Right ventricle myocardium inferior (tissue), 1 donor: ENCODE measurements at regions of chrX and their contacts with region 1.

Region 1: DNA sequence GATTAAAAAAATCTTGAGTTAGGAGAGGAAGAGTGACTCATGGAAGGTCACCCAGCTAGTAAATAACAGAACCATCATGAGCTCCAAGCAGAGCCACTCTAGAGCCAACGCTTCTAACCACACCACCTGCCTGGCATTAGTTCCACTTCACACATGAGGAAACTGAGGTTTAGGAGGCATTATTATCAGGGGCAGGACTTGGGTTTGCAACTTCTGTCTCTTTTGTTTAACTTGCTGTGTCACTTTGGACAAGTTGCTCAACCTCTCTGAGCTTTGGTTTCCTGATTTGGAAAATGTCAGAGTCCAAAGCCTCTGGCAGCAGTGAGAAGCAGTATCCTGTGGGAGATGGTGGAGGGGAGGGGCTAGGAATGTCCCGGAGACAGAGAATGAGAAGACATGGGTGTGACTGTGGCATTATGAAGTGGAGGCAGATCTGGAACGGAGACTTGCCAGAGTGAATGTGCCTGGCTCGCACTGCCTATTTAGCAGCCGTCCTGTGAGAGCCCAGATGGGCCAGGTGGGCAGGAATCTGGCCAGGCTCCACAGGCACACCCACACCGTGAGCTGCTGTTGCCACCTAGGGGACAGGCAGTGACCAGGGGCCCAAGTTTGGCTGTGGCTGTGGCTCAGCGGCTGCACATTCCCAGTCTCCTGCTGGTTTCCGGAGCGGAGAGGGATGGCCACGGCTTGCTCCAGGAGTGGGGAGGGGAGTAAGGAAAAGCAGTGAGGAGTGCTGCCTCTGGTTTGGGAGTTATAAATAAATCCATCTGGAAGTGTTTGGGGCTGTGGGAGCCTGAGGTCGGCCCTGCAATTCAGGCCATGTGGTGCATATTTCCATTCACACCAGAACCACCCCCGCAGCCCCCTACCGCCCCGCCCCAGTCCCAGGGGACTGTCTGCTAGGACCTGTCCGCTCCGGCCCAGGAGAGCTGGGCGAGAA is 93.4 kb downstream of the NHSL2 start:
- DNase-seq: peak; percentile 50
- ATAC-seq: peak; percentile 89

Region 2: DNA sequence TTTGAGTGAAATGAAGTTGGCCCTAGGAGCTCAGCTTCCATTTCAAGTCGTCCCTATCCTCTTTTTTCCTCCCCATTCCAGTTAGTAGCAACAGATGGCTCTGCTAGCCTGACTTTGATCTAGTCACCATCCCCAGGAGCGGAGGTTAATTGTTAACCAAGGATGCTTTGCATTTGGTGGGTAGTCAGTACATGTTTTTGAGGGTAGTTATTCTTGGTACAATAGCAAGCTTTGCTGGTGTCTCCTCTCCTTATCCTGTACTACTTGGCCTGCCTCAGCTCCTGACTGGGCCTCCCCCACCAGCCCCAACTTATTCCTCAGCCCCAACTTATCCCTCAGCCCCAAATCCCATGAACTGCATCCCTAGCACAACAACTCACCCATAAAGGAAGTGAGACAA is 142.4 kb after region 1 on chrX:
- intact Hi-C with region 1: no loop called
- DNase-seq: no peak
- ATAC-seq: no peak

Region 3: DNA sequence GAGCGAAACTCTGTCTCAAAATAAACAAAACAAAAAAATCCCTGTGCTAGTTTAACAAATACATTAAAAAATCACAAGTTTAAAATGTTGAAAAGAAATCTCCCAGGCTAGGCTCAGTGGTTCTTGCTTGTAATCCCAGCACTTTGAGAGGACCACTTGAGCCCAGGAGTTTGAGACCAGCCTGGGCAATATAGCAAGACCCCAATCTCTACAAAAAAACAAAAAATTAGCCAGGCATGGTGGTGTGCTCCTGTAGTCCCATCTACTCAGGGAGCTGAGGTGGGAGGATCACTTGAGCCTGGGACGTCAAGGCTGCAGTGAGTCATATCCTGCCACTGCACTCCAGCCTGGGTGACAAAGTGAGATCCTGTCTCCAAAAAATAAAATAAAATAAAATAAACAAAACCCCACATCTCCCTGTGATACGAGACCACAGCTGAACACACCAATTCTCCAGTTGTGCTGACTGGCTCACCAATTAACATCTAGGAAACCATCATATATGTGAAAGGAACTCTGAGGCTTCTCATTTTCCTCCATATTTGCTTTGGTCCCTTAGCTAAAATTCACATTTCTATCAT is 265.7 kb after region 1 on chrX:
- intact Hi-C with region 1: loop called (anchors 10 kb)
- DNase-seq: no peak
- ATAC-seq: no peak